ENCODE measurements at regions of chr1 and their contacts with region 1.

Region 1: GRCh38 chr1:108799001-108799400 is 52.5 kb downstream of the STXBP3 start:
- DNase-seq: no peak
- H3K4me3 ChIP-seq: no peak overlapping the region
- H3K27ac ChIP-seq: no peak overlapping the region
- H3K4me1 ChIP-seq: no peaks in the 10 kb centered on the region
- H3K27me3 ChIP-seq: no peaks in the 10 kb centered on the region
- CTCF ChIP-seq: no peak

Region 2: DNA sequence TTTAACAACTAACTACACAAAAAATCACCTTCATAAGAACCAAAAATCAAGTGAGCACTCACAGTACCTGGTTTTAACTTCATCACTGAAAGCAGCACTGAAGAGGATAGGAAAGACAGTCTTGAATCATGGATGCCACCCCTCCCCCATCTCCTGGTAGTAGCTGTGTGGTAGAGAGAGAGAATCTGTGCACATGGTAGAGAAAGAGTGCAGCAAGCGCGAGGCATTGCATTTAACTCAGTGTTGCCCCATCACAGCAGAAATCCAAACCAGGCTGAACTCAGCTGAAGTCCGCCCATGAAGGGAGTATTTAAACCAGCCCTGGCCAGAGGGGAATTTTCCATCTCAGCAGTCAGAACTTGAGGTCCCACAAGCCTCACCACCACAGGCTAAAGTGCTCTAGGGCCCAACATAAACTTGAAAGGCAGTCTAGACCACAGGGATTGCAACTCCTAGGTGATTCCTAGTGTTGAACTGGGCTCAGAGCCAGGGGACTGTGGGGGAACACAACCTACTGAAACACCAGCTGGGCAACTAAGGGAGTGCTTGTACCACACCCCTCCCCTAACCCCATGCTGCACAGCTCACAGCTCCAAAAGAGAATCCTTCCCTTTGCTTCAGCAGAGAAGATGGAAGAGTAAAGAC is 872.4 kb before region 1 on chr1:
- CTCF ChIA-PET with region 1: no interaction called
- POLR2A ChIA-PET with region 1: no interaction called
- intact Hi-C with region 1: no loop called
- DNase-seq: peak in 1 of 2 experiments; percentile 3
- H3K4me3 ChIP-seq: no peak overlapping the region
- H3K27ac ChIP-seq: no peak overlapping the region
- H3K4me1 ChIP-seq: no peaks in the 10 kb centered on the region
- H3K27me3 ChIP-seq: no peaks in the 10 kb centered on the region
- CTCF ChIP-seq: no peak

Region 3: DNA sequence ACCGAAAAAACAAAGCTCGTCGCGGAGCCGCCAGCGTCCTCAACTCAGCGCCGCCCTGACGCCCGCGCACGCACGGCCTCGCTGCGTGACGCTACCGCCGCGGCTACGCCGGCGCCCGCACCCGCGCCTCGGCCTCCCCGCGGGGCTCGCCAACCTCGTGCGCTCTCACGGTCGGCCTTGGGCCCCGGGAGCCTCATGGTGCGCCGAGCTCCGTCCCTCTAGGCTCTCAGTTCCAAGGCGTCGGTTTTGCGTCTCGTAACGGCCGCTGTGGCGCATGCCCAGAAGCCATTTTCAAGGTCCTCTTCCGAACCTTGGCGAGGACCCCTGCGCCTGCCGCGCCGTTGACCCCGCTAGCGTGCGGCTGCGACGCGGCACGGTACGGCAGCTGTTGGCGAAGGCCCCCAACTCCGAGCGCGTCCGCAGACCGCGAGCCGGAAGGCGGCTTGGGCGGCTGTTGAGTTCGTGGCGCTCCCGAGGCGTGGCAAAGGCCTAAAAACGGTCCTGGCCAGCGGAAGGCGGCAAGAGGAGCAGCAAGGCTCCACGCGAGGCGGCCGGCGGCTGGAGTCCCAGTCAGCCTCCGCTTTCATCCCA is 137.9 kb before region 1 on chr1 and contains the start of gene HENMT1:
- CTCF ChIA-PET with region 1: no interaction called
- POLR2A ChIA-PET with region 1: no interaction called
- intact Hi-C with region 1: no loop called
- DNase-seq: peak; percentile 58 to 59
- H3K4me3 ChIP-seq: peak within 1 kb of the TSS; percentile 83
- H3K27ac ChIP-seq: peak within 1 kb of the TSS; percentile 86
- H3K4me1 ChIP-seq: peaks cover 13% of the 10 kb centered on the region
- H3K27me3 ChIP-seq: no peaks in the 10 kb centered on the region
- CTCF ChIP-seq: no peak
- total RNA-seq, gene HENMT1: 17.9 and 21.5 TPM in 2 replicates

Region 4: DNA sequence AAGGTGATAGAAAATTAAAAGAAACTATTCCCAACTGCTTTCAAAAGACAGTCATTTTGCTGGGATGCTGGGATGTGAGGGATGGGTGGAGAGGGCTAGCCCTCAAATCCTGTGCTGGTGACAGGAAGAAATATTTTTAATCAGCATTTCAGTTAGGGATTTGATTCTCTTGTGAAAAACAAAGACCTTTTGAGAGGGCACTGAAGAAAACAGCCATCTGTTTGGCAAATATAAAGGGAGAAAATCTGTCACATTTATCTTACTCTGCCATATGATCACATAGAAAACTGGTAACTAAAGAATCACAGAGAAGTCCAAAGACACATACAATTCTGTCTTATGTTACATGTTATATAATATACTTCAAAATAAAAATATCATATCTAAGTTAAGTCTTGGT is 40.2 kb before region 1 on chr1:
- CTCF ChIA-PET with region 1: no interaction called
- POLR2A ChIA-PET with region 1: no interaction called
- intact Hi-C with region 1: loop called (anchors 5 kb)
- DNase-seq: no peak
- H3K4me3 ChIP-seq: no peak overlapping the region
- H3K27ac ChIP-seq: no peak overlapping the region
- H3K4me1 ChIP-seq: no peaks in the 10 kb centered on the region
- H3K27me3 ChIP-seq: no peaks in the 10 kb centered on the region
- CTCF ChIP-seq: no peak